ENCODE measurements at regions of chrX and their contacts with region 1.

Region 1: DNA sequence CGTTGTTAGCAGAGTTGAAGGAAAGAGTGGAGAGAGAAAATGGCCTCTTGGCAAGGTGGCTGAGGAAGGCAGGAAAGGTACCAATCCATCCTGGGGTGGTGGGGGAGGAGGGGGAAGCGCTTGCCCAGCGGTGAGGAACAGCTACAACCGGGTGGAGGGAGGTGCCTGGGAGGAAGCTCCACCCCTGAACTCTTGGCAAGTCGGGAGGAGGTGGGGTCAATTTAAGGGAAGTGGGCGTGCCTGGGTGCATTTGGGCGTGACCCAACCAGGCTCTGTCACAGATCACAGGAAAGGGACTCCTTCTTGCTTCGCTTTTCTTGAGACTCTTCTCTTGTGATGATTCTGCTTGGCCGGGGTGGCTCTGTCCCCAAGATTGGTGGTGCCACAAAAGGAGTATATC is 41.7 kb downstream of the BCORL1 start:
- DNase-seq: peak; percentile 65
- ATAC-seq: peak; percentile 100
- H3K4me3 ChIP-seq: peak overlapping the region; percentile 43; the same call in 1 of the 2 replicates
- H3K27ac ChIP-seq: peak overlapping the region; percentile 20; the same call in 1 of the 2 replicates
- H3K4me1 ChIP-seq: no peaks in the 10 kb centered on the region
- H3K27me3 ChIP-seq: no peaks in the 10 kb centered on the region
- CTCF ChIP-seq: no peak
- EP300 ChIP-seq: no peak
- POLR2A ChIP-seq: no peak
- RAD21 ChIP-seq: no peak

Region 2: GRCh38 chrX:129905787-129906580 is 118.1 kb before region 1 on chrX and contains the start of gene UTP14A:
- CTCF ChIA-PET with region 1: interaction called, 5 read pairs
- POLR2A ChIA-PET with region 1: no interaction called
- RAD21 ChIA-PET with region 1: no interaction called
- SMC1A ChIA-PET with region 1: interaction called, 3 read pairs
- in situ Hi-C with region 1: no loop called
- intact Hi-C with region 1: loop called (anchors 5 kb)
- DNase-seq: peak; percentile 68
- ATAC-seq: peak; percentile 98
- H3K4me3 ChIP-seq: peak within 1 kb of the TSS; percentile 84
- H3K27ac ChIP-seq: peak within 1 kb of the TSS; percentile 35; the same call in 1 of the 2 replicates
- H3K4me1 ChIP-seq: no peaks in the 10 kb centered on the region; the same call in 1 of the 2 replicates
- H3K27me3 ChIP-seq: no peaks in the 10 kb centered on the region
- CTCF ChIP-seq: no peak
- EP300 ChIP-seq: no peak
- POLR2A ChIP-seq: peak; percentile 76
- RAD21 ChIP-seq: no peak
- polyA plus RNA-seq, gene UTP14A: 16.9 to 25.4 TPM

Region 3: DNA sequence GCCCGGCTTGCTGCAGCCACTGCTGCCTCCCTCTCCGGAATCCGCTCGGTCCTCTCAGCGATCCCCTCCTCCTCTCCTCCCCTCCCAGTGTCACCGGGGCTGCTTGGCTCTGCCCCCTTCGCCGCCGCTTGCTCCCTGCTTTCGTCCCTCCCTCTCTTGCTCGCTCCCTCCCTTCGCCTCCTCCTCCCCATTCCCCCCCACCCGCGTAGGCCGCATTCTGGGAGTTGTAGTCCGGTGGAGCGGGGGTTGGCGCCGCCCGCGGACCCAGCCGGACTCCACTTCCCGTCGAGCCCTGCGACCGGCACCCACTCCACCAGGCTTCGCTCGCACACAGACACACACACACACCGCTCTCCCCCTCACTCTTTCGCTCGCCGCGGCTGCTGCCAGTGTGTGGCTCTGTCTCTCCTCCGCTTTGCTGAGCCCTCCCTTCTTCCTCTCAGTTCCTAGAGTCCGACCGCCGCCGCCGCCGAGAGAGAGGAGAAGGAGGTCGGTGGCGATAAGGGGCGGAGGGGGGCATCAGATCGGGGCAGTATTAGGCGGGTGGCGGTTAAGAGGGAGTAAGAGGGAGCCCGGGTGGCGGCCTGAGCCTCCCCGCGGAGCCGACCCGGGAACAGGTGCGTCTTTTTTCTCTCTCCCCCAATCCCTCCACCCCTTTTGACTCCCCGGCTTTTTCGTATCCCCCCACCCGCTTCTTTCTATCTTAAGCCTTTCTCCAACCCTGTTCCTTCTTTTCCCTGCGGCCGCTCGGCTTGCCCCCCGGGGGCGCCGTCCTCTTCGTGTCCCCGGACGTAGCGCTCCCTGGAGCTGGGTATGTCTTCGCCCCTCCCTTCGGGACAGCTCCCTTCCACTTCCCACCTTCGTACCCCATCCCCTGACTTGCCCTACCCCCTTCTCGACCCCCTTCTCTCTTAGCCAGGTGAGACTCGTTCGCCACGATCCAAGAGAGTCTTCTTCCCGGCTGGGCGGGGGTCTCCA is 41.6 kb before region 1 on chrX and contains the start of gene BCORL1:
- CTCF ChIA-PET with region 1: interaction called, 5 read pairs
- POLR2A ChIA-PET with region 1: interaction called, 8 read pairs
- RAD21 ChIA-PET with region 1: interaction called, 3 read pairs
- SMC1A ChIA-PET with region 1: interaction called, 3 read pairs
- in situ Hi-C with region 1: loop called (anchors 5 kb)
- intact Hi-C with region 1: loop called (anchors 2 kb)
- DNase-seq: peak; percentile 66
- ATAC-seq: peak; percentile 93
- H3K4me3 ChIP-seq: peak within 1 kb of the TSS; percentile 63; the same call in 1 of the 2 replicates
- H3K27ac ChIP-seq: no peak within 1 kb of the TSS
- H3K4me1 ChIP-seq: peaks cover 5% of the 10 kb centered on the region; the same call in 1 of the 2 replicates
- H3K27me3 ChIP-seq: no peaks in the 10 kb centered on the region
- CTCF ChIP-seq: no peak
- EP300 ChIP-seq: no peak
- POLR2A ChIP-seq: peak; percentile 94
- RAD21 ChIP-seq: no peak
- polyA plus RNA-seq, gene BCORL1: 0.16 to 0.22 TPM

Region 4: GRCh38 chrX:130039847-130040246 is 15.7 kb after region 1 on chrX:
- CTCF ChIA-PET with region 1: interaction called, 10 read pairs
- POLR2A ChIA-PET with region 1: no interaction called
- RAD21 ChIA-PET with region 1: no interaction called
- SMC1A ChIA-PET with region 1: no interaction called
- in situ Hi-C with region 1: no loop called
- intact Hi-C with region 1: no loop called
- DNase-seq: no peak
- ATAC-seq: no peak
- H3K4me3 ChIP-seq: no peak overlapping the region
- H3K27ac ChIP-seq: no peak overlapping the region
- H3K4me1 ChIP-seq: no peaks in the 10 kb centered on the region
- H3K27me3 ChIP-seq: no peaks in the 10 kb centered on the region
- CTCF ChIP-seq: no peak
- EP300 ChIP-seq: no peak
- POLR2A ChIP-seq: no peak
- RAD21 ChIP-seq: no peak

Region 5: GRCh38 chrX:130060122-130061069 is 36.3 kb after region 1 on chrX:
- CTCF ChIA-PET with region 1: interaction called, 10 read pairs
- POLR2A ChIA-PET with region 1: no interaction called
- RAD21 ChIA-PET with region 1: interaction called, 7 read pairs
- SMC1A ChIA-PET with region 1: interaction called, 3 read pairs
- in situ Hi-C with region 1: no loop called
- intact Hi-C with region 1: no loop called
- DNase-seq: no peak
- ATAC-seq: peak; percentile 98
- H3K4me3 ChIP-seq: peak overlapping the region; percentile 36; the same call in 1 of the 2 replicates
- H3K27ac ChIP-seq: no peak overlapping the region
- H3K4me1 ChIP-seq: peaks cover 3% of the 10 kb centered on the region; the same call in 1 of the 2 replicates
- H3K27me3 ChIP-seq: no peaks in the 10 kb centered on the region
- CTCF ChIP-seq: peak; percentile 66 to 90 (median 76)
- EP300 ChIP-seq: no peak
- POLR2A ChIP-seq: peak; percentile 66
- RAD21 ChIP-seq: peak; percentile 79

Region 6: DNA sequence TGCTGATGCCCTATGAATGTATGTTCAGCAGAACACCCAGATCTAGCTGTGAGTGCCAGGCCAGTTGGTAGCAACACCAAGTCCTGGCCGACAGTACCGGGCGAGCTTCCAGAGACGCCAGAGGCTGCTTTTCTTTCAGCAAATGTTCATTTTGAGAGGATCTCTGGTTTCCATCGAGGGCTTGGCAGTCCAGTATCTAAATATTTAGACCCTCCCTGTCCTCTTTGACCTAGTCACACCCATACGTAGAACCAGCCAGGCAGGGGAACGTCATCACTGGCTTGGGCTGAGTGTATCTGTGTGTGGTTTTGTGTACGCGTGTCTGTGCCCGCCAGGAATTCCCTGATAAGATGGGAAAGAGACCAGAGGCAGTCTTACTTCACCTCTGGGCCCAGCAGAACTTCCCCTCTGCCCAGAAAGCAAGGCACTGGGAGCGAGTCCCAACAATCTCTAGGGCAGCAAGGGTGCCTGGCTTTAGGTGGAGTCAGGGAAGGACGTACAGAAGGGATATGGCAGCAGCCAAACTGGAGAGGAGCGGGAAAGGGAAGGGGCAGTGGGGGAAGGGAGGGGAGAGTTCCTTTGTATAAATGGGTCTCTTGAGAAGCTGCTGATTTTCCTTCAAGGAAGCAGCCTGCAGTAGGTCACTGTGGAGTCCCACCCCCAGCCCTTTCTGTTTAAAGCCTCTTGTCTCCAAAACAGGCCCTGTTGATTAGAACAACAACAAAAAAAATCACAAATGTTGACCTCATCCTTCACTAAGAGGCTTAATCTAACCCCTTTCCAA is 101.2 kb after region 1 on chrX:
- CTCF ChIA-PET with region 1: no interaction called
- POLR2A ChIA-PET with region 1: no interaction called
- RAD21 ChIA-PET with region 1: no interaction called
- SMC1A ChIA-PET with region 1: no interaction called
- in situ Hi-C with region 1: no loop called
- intact Hi-C with region 1: no loop called
- DNase-seq: no peak
- ATAC-seq: no peak
- H3K4me3 ChIP-seq: no peak overlapping the region
- H3K27ac ChIP-seq: no peak overlapping the region
- H3K4me1 ChIP-seq: peaks cover 7% of the 10 kb centered on the region
- H3K27me3 ChIP-seq: no peaks in the 10 kb centered on the region; a peak in 1 of 4 replicates
- CTCF ChIP-seq: no peak
- EP300 ChIP-seq: no peak
- POLR2A ChIP-seq: no peak
- RAD21 ChIP-seq: no peak